ENCODE measurements at regions of chr19 and their contacts with region 1.

Region 1: DNA sequence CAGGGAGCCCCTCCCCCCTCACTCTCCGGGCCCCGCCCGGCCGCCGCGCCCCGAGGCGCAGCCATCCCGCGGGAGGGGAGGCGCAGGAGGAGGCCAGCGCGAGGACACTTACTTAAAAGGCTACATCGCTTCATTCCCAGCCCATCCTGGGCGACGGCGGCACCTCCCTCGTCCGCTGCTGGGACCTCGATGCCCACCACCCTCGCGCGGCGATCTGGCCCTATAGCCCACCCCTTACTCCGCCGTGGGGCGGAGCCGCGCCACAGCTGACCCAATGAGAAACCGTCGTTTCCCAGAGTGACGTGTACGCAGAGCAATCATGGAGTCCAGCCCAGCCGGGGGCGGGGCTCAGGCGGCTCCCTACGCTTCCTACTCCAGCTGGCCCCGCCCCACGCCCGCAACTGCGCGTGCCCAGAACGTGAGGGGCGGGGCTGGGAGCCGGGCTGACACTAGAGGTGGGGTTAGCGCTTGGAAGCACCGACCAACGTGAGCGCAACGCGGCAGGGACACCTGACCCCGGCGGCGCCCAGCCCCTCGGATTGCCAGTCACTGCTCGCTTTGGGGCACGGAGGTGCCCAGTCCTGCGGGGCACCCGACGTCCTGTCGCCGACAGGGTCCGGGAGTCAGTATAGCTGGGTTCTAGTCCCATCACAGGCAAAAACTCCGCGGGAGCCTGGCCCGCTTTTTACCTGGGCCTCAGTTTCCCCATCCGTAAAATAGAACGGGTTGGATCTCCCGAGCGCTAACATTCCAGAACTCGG is at the start of gene ANKRD27:
- DNase-seq: peak; percentile 99
- ATAC-seq: peak; percentile 94
- total RNA-seq, gene ANKRD27: 22.6 TPM

Region 2: DNA sequence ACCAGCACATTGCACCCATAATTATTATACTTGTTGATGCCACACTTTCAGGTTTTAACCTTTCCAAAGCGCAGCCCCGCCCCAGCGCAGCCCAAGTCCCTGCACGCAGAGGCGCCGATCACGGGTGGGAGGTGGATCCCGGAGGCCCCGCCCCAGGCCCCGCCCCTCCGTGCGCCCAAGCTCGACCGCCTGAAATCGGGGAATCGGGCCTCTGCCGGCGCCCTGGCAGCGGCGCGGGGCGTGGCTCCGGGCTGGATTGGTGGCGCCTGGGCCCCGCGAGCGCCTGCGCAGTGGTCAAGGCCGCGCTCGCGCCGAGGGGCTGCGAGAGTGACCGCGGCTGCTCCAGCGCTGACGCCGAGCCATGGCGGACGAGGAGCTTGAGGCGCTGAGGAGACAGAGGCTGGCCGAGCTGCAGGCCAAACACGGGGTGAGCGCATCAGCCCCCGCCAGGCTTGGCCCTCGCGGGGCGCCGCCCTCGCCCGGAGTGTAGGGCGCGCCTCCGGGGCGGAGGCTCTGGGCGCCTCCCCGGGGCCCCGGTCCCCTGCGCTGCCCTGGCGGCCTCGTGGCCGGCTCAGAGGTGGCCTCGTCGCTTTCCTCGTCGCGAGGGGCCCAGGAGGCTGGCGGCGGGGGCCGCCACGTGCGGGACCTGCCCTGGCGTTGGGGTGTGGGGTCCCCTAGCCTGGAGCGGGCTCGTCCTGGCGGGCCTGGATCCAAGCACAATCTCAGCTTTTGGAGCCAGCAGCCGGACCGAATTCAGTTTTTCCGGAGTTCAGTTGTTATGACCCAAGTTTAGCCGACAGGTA is 94.0 kb before region 1 on chr19 and contains the start of gene PDCD5:
- intact Hi-C with region 1: loop called (anchors 10 kb)
- DNase-seq: peak; percentile 99
- ATAC-seq: peak; percentile 99
- total RNA-seq, gene PDCD5: 137 TPM

Region 3: DNA sequence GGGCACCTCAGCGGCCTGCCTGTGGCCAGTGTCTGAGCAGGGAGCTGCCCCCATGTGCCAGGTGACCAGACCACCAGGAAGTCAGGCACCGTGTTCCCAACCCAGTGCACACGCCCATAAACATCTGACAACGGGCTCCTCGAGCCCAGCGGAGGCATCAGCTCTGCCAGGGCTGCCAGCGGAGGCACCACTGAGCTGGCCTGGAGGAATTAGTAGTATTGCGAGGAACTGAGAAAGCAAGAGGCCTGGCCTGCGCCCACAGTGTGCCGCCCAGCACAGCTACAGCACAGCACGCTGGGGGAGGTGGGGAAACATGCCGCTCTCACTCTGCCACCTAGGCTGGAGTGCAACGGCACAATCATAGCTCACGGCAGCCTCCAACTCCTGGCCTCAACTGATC is 44.8 kb before region 1 on chr19:
- intact Hi-C with region 1: no loop called
- DNase-seq: no peak
- ATAC-seq: no peak

Region 4: GRCh38 chr19:32735936-32736335 is 60.8 kb after region 1 on chr19:
- intact Hi-C with region 1: no loop called
- DNase-seq: no peak
- ATAC-seq: no peak

Region 5: DNA sequence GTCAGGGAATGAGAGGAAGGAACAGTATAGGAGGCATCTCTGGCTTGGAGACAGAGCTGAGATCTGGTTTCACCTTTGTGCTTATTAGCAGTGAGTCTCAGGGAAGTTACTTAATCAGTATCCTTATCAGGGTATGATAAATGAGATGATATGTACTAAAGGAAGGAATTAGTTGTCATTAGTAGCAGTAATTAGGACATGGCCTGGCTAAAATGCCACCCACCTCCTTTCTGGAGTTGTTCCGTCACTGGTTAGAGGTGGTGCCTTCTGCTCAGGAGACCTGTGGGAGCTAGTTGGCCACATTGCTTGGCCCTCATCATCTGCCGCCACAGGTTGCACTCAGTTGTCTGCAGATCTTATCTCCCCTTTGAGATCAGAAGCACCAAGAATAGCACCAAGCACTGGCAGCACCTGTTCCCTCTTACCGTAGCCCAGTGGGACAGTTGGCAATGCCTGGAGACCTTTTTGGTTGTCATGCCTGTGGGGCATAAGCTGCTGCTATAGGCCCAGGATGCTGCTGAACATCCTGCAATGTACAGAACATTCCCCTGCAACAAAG is 410.5 kb after region 1 on chr19:
- intact Hi-C with region 1: no loop called
- DNase-seq: no peak
- ATAC-seq: no peak